ENCODE measurements at regions of chr17 and their contacts with region 1.

Region 1: GRCh38 chr17:54992797-54993639 is 24.5 kb downstream of the STXBP4 start:
- DNase-seq: peak; percentile 30
- H3K4me3 ChIP-seq: no peak overlapping the region
- H3K27ac ChIP-seq: no peak overlapping the region
- H3K4me1 ChIP-seq: no peaks in the 10 kb centered on the region
- H3K27me3 ChIP-seq: no peaks in the 10 kb centered on the region
- CTCF ChIP-seq: peak; percentile 57 to 58

Region 2: DNA sequence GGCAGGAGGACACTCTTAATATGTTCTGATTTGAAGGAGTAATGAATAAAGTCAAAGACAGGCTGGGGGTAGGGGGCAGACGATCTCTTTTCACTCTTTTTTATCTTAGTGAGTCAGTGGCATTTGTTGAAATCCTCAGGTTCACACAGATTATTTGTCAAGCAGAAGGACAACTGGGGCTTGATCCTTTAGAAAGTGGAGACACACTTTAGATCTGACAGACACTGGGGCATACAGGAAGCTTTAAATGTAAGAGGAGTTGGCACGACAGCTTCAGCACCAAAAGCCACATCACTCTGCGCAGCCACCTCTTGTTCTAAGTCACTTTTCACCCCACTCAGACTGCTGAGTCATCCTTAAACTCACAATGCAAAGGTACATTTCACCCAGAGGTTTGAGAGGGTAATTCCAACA is 97.1 kb after region 1 on chr17:
- CTCF ChIA-PET with region 1: no interaction called
- dilution Hi-C with region 1: no loop called
- in situ Hi-C with region 1: loop called in 1 of 2 experiments (anchors 25 kb)
- intact Hi-C with region 1: no loop called
- DNase-seq: no peak
- H3K4me3 ChIP-seq: no peak overlapping the region
- H3K27ac ChIP-seq: no peak overlapping the region
- H3K4me1 ChIP-seq: no peaks in the 10 kb centered on the region
- H3K27me3 ChIP-seq: no peaks in the 10 kb centered on the region
- CTCF ChIP-seq: no peak

Region 3: DNA sequence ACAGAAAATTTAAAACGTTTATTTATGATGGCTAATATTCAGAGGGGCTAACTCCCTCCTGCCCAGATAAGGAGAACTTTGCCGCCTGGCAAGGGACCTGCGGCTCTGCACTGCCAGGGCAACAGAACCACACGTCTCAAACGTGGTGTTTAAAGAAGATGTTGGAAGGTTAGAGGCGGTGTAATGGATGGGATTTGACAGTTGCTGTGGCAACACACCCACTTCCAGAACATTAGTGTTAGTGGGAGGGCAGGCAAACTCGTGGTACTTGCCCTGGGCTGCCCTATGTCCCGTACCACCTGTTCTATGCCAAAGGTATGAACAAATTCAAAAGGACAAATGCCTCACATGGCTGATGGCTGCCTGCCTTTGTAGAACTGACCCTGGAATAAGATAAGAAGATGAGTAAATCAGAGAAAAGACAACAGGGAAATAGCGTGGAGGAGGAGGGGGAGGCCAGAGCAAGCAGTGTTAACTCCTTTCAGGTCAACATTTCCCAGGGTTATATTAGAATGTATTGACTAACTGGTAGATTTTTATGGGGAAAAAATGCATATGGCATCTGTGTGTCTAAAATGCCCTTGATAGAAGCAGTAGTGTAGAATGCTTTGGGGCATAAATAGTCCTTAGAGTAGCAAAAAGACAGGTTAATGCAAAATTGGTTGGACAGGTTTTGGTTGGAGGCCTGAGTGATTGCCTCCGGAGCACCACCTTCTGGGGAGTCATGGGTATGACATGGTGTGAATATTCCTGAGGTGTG is 302.6 kb after region 1 on chr17:
- CTCF ChIA-PET with region 1: no interaction called
- dilution Hi-C with region 1: no loop called
- in situ Hi-C with region 1: loop called in 1 of 2 experiments (anchors 25 kb)
- intact Hi-C with region 1: loop called (anchors 1 kb)
- DNase-seq: peak; percentile 51
- H3K4me3 ChIP-seq: no peak overlapping the region
- H3K27ac ChIP-seq: no peak overlapping the region
- H3K4me1 ChIP-seq: no peaks in the 10 kb centered on the region
- H3K27me3 ChIP-seq: no peaks in the 10 kb centered on the region
- CTCF ChIP-seq: peak; percentile 86 to 91

Region 4: DNA sequence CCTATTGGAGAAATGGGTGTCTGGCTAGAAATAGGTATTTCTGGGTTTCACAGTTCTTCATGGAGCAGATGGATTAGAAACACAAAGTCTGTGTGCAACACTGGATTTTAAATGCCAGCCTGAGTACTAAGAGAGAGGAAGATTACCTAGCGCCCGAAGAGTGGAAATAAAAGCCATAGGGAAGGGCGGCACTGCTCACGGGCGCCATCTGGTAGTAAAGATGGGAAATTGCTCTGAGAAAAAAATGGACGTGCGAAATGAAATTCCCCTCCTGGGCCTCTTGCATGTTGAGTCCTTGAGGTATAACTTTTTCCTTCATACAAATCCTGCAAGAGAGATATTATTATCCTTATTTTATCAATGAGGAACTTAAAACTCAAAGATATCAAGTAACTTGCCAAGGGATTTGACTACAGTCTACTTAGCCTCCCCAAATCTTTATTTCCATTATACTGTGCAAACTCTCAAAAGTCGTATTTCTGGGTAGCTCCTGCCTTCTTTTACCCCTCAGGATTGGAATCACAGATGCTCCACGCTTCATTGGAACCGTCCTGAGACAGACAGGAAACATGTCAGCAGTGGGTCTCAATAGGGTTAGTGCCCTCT is 355.8 kb after region 1 on chr17:
- CTCF ChIA-PET with region 1: interaction called, 4 read pairs
- dilution Hi-C with region 1: no loop called
- in situ Hi-C with region 1: loop called in 1 of 2 experiments (anchors 10 kb)
- intact Hi-C with region 1: loop called (anchors 1 kb)
- DNase-seq: peak; percentile 38
- H3K4me3 ChIP-seq: no peak overlapping the region
- H3K27ac ChIP-seq: no peak overlapping the region
- H3K4me1 ChIP-seq: no peaks in the 10 kb centered on the region
- H3K27me3 ChIP-seq: no peaks in the 10 kb centered on the region
- CTCF ChIP-seq: peak; percentile 81 to 89

Region 5: GRCh38 chr17:55366020-55366481 is 373.0 kb after region 1 on chr17:
- CTCF ChIA-PET with region 1: no interaction called
- dilution Hi-C with region 1: no loop called
- in situ Hi-C with region 1: no loop called
- intact Hi-C with region 1: no loop called
- DNase-seq: no peak
- H3K4me3 ChIP-seq: no peak overlapping the region
- H3K27ac ChIP-seq: no peak overlapping the region
- H3K4me1 ChIP-seq: no peaks in the 10 kb centered on the region
- H3K27me3 ChIP-seq: peaks cover 2% of the 10 kb centered on the region
- CTCF ChIP-seq: no peak

Region 6: DNA sequence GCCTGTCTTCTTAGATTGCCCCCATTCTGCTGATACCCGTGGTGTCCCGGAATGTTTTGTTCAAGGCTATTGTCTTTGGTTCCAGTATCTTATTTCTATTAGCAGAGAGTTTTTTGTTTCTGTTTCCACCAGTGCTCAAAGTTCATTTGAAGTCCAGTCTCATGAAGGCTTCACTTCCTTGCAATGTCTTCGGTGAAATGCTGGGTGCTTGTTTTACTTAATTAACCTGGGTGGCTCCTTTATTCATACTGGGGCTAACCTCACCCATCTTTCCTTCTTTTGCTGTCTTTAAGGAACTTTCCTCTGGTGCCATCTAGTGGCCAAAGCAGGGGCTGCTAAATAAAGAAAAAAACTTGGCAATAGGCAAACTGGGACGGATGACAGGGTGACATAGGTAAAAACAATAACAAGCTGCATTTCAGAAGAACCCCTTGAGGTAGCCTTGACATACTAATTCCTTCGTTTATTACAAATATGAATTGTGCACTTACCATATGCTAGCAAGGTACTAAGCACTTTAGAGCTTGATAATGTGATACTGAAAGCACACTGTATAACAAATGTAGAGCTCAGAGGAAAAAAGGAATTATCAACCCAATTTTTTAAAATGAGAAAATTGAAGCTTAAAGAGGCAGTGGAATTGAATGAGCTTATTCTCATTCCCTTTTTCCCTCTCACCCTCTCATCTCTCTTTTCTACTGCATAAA is 521.0 kb after region 1 on chr17:
- CTCF ChIA-PET with region 1: interaction called, 3 read pairs
- dilution Hi-C with region 1: no loop called
- in situ Hi-C with region 1: loop called in 1 of 2 experiments (anchors 25 kb)
- intact Hi-C with region 1: loop called (anchors 1 kb)
- DNase-seq: peak; percentile 60
- H3K4me3 ChIP-seq: no peak overlapping the region
- H3K27ac ChIP-seq: no peak overlapping the region
- H3K4me1 ChIP-seq: no peaks in the 10 kb centered on the region
- H3K27me3 ChIP-seq: no peaks in the 10 kb centered on the region
- CTCF ChIP-seq: peak; percentile 94 to 96